Left cardiac atrium (tissue), 4 donors: ENCODE measurements at regions of chr9 and their contacts with region 1.

Region 1: DNA sequence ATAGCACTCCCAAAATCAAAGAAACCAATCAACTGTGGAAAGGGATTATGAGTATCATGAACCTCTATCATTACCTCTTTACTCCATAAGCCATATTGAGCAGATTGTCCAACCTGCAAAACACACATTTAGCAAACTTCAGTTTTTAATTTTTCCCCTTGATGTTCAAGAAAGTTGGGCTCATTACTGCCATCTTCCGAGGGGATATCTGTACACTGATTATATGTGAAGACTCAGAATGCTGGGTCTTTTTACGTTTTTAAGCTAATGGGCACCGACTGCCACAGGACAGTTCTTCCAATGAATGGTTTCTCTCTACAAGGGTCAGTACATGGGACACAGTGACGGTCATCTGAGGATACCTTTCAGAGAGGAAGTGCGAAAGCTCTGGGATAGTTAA is 132.7 kb downstream of the ELAVL2 start:
- DNase-seq: no peak
- ATAC-seq: no peak

Region 2: GRCh38 chr9:23615569-23615968 is 77.8 kb before region 1 on chr9:
- intact Hi-C with region 1: loop called in 1 of 2 experiments (anchors 2 kb)
- DNase-seq: no peak
- ATAC-seq: no peak

Region 3: GRCh38 chr9:23674016-23674585 is 19.3 kb before region 1 on chr9:
- intact Hi-C with region 1: no loop called
- DNase-seq: no peak
- ATAC-seq: no peak